Endothelial cell of umbilical vein (primary cell): ENCODE measurements at regions of chr2 and their contacts with region 1.

Region 1: GRCh38 chr2:105369747-105370690 is 28.8 kb downstream of the FHL2 start:
- DNase-seq: peak; percentile 85
- H3K4me3 ChIP-seq: no peak overlapping the region
- H3K27ac ChIP-seq: peak overlapping the region; percentile 25
- H3K4me1 ChIP-seq: peaks cover 24% of the 10 kb centered on the region
- H3K27me3 ChIP-seq: no peaks in the 10 kb centered on the region
- CTCF ChIP-seq: peak; percentile 87 to 89
- POLR2A ChIP-seq: no peak

Region 2: DNA sequence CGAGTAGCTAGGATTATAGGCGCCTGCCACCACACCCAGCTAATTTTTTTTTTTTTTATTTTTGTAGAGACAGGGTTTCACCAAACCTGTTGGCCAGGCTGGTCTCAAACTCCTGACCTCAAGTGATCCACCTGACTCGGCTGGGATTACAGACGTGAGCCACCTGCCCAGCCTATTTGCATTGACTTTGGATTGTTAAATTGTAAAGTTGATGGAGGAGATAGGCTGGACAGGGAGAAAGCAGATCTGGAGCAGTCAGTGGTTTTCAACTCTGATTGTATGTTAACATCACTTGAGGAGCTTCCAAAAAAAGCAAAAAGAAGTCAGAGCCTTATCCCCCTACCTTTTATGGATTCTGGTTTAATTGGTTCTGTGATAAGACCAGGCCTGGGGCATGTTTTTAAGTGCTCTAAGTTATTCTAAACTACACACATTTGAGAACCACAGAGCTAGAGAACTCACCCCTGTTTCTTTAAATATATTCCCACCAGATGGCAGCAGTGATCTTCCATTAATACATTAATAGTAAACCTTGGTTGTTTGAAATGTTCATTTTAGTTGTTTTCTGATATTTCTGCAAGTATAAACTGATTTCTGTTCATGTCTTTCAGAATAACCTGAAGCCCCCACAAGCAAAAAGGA is 25.2 kb before region 1 on chr2:
- CTCF ChIA-PET with region 1: interaction called, 7 read pairs
- POLR2A ChIA-PET with region 1: no interaction called
- dilution Hi-C with region 1: no loop called
- intact Hi-C with region 1: loop called (anchors 1 kb)
- DNase-seq: peak; percentile 62
- H3K4me3 ChIP-seq: no peak overlapping the region
- H3K27ac ChIP-seq: no peak overlapping the region
- H3K4me1 ChIP-seq: no peaks in the 10 kb centered on the region
- H3K27me3 ChIP-seq: no peaks in the 10 kb centered on the region
- CTCF ChIP-seq: peak; percentile 12 to 24
- POLR2A ChIP-seq: no peak

Region 3: GRCh38 chr2:105398699-105399432 is 28.8 kb after region 1 on chr2 and contains the start of gene FHL2:
- CTCF ChIA-PET with region 1: interaction called, 5 read pairs
- POLR2A ChIA-PET with region 1: interaction called, 4 read pairs
- dilution Hi-C with region 1: no loop called
- intact Hi-C with region 1: loop called (anchors 1 kb)
- DNase-seq: peak; percentile 77
- H3K4me3 ChIP-seq: peak within 1 kb of the TSS; percentile 59 to 99 (median 99)
- H3K27ac ChIP-seq: peak within 1 kb of the TSS; percentile 92
- H3K4me1 ChIP-seq: peaks cover 43% of the 10 kb centered on the region
- H3K27me3 ChIP-seq: no peaks in the 10 kb centered on the region
- CTCF ChIP-seq: peak; percentile 40 to 62
- POLR2A ChIP-seq: peak; percentile 87
- total RNA-seq, gene FHL2: 178 and 197 TPM in 2 replicates

Region 4: GRCh38 chr2:105403785-105404698 is 34.0 kb after region 1 on chr2:
- CTCF ChIA-PET with region 1: interaction called, 4 read pairs
- POLR2A ChIA-PET with region 1: no interaction called
- dilution Hi-C with region 1: no loop called
- intact Hi-C with region 1: loop called (anchors 1 kb)
- DNase-seq: peak; percentile 86
- H3K4me3 ChIP-seq: no peak overlapping the region
- H3K27ac ChIP-seq: peak overlapping the region; percentile 66
- H3K4me1 ChIP-seq: peaks cover 40% of the 10 kb centered on the region
- H3K27me3 ChIP-seq: no peaks in the 10 kb centered on the region
- CTCF ChIP-seq: peak; percentile 48 to 62
- POLR2A ChIP-seq: peak; percentile 10

Region 5: DNA sequence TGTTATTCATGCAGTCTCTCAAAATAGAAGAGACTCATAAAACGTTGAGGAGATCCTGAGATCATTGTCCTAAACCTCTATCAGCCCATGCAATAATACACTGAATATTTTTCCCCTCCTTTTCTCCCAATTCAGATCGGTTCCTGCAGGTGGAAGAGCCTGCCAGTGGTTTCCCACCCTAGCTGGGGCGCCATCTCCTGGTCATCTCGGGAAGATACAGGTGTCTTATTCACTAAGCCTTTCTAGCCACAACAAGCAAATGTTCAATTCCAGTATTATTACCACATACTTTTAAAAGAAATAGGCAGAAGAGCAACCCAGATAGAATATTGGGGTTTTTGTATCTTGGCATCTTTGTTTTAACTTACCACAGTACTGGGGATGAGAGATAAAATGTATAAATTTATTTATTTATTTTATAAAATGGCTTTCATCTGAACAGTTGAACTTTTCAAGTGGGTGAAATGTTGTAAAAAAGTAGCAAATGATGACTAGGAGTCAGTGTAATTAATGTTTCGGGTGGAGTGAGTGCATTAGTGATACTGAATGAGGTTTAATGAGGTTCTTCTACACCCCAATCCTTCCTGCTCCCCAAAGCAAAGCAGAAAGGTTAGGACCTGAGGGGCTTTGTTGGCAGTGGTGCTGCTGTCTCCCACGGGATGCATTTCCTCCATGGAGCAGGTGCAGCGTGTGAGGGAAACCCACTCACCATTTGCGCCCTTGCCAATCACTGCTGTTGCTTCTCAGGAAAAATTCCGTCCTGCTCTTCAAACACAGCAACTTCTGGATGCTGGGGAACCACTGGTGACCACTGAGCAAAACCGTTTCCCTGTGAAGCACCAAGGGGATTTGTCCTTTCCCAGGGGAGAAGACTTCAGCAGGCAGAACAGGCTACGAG is 176.0 kb after region 1 on chr2:
- CTCF ChIA-PET with region 1: no interaction called
- POLR2A ChIA-PET with region 1: no interaction called
- dilution Hi-C with region 1: no loop called
- intact Hi-C with region 1: loop called (anchors 1 kb)
- DNase-seq: peak; percentile 76
- H3K4me3 ChIP-seq: no peak overlapping the region
- H3K27ac ChIP-seq: no peak overlapping the region
- H3K4me1 ChIP-seq: peaks cover 17% of the 10 kb centered on the region
- H3K27me3 ChIP-seq: peaks cover 0 to 3% of the 10 kb centered on the region in 2 experiments
- CTCF ChIP-seq: peak; percentile 74 to 77
- POLR2A ChIP-seq: no peak